GM13977 (cell line): ENCODE measurements at regions of chr3 and their contacts with region 1.

Region 1: GRCh38 chr3:123559040-123559861 is 25.6 kb downstream of the HACD2 start:
- DNase-seq: peak; percentile 59
- CTCF ChIP-seq: peak; percentile 69

Region 2: DNA sequence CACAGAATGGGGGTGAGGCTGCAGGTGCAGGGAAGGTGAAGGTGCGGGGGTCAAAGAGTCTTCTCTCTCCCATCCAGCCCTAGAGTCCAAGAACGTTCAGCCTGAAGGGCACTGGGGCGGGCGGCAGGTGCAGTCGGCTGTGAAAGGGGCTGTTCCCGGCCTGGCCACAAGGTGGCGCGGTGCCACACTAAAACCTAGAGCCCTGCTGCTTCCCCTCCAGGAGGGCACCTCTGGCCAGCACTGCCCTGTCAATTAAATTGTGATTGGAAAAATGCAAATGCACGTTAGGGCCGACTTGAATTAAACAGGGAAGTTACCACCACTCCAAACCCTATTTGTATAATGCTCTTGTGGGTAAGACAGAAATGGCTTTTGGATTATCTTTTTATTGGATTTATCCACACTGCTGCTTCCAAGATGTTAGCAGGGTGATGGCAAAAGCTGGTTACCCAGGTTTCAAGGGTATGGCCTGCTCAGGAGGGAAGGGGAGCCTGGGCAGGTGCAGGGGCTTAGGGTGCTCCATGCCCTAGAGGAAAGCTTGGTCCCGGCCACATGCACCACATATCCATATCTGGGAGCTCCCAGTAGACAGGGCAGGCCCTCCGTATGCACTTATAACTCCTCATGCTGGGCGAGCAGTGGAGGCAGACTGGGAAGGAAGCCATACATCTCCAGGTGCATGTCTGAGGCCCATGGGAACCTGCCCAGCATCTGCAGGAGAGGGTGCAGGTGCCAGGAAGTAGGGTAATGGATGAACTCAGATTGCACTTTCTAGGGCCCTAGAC is 230.2 kb before region 1 on chr3:
- in situ Hi-C with region 1: loop called (anchors 25 kb)
- DNase-seq: peak; percentile 86
- CTCF ChIP-seq: peak; percentile 97

Region 3: GRCh38 chr3:123431658-123432324 is 127.5 kb before region 1 on chr3:
- in situ Hi-C with region 1: no loop called
- DNase-seq: no peak
- CTCF ChIP-seq: no peak

Region 4: GRCh38 chr3:123489400-123490004 is 69.7 kb before region 1 on chr3:
- in situ Hi-C with region 1: no loop called
- DNase-seq: peak; percentile 75
- CTCF ChIP-seq: peak; percentile 90